HepG2 (cell line): ENCODE measurements at regions of chr6 and their contacts with region 1.

Region 1: GRCh38 chr6:31271641-31272357 is at the start of gene HLA-C:
- DNase-seq: peak; percentile 95
- ATAC-seq: peak; percentile 98
- H3K4me3 ChIP-seq: peak within 1 kb of the TSS; percentile 66 to 77 (median 69)
- H3K27ac ChIP-seq: peak within 1 kb of the TSS; percentile 35
- H3K4me1 ChIP-seq: peaks cover 9% of the 10 kb centered on the region
- H3K27me3 ChIP-seq: peaks cover 0 to 7% of the 10 kb centered on the region in 2 experiments; a peak in 3 of 5 replicates
- CTCF ChIP-seq: no peak; the same call in 1 of the 2 replicates
- EP300 ChIP-seq: no peak
- POLR2A ChIP-seq: peak in 1 of 2 experiments; percentile 73; a peak in 2 of 4 replicates
- RAD21 ChIP-seq: no peak
- total RNA-seq, gene HLA-C: 31.5 and 77.1 TPM in 2 replicates

Region 2: GRCh38 chr6:30238174-30238795 is 1033.5 kb before region 1 on chr6:
- CTCF ChIA-PET with region 1: no interaction called
- POLR2A ChIA-PET with region 1: no interaction called
- in situ Hi-C with region 1: no loop called
- intact Hi-C with region 1: no loop called
- DNase-seq: peak; percentile 60
- ATAC-seq: peak; percentile 93
- H3K4me3 ChIP-seq: no peak overlapping the region
- H3K27ac ChIP-seq: no peak overlapping the region
- H3K4me1 ChIP-seq: no peaks in the 10 kb centered on the region
- H3K27me3 ChIP-seq: peaks cover 1 to 19% of the 10 kb centered on the region in 2 experiments
- CTCF ChIP-seq: peak; percentile 86
- EP300 ChIP-seq: no peak
- POLR2A ChIP-seq: no peak
- RAD21 ChIP-seq: peak; percentile 77

Region 3: GRCh38 chr6:31143148-31143547 is 128.7 kb before region 1 on chr6:
- CTCF ChIA-PET with region 1: no interaction called
- POLR2A ChIA-PET with region 1: no interaction called
- in situ Hi-C with region 1: no loop called
- intact Hi-C with region 1: no loop called
- DNase-seq: no peak
- ATAC-seq: no peak
- H3K4me3 ChIP-seq: no peak overlapping the region
- H3K27ac ChIP-seq: no peak overlapping the region
- H3K4me1 ChIP-seq: no peaks in the 10 kb centered on the region
- H3K27me3 ChIP-seq: no peaks in the 10 kb centered on the region
- CTCF ChIP-seq: no peak
- EP300 ChIP-seq: no peak
- POLR2A ChIP-seq: no peak
- RAD21 ChIP-seq: no peak

Region 4: DNA sequence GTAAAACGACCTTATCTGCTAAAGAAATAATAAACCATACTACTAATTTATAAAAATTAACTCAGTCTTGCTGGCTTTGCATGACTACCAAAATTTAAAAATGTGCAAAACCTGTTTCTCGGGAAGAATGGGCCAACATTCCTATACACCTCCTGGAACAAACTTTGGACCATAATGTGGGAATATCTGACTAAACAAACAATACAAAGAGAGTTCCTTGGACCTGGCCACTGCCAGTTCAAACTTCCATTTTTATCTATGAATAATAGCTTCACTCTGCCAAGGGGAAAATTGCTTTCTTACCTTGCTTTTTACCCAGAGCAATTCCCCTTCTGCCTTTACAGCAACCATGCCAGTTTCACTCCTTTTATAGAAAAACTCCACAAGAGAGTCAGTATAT is 62.7 kb before region 1 on chr6:
- CTCF ChIA-PET with region 1: no interaction called
- POLR2A ChIA-PET with region 1: no interaction called
- in situ Hi-C with region 1: no loop called
- intact Hi-C with region 1: loop called (anchors 2 kb)
- DNase-seq: peak; percentile 89
- ATAC-seq: peak; percentile 74
- H3K4me3 ChIP-seq: peak overlapping the region in 2 of 3 experiments; percentile 39 to 41; a peak in 3 of 6 replicates
- H3K27ac ChIP-seq: peak overlapping the region; percentile 80
- H3K4me1 ChIP-seq: peaks cover 61% of the 10 kb centered on the region
- H3K27me3 ChIP-seq: no peaks in the 10 kb centered on the region
- CTCF ChIP-seq: no peak
- EP300 ChIP-seq: peak in 1 of 2 experiments; percentile 49; a peak in 2 of 4 replicates
- POLR2A ChIP-seq: no peak
- RAD21 ChIP-seq: no peak

Region 5: DNA sequence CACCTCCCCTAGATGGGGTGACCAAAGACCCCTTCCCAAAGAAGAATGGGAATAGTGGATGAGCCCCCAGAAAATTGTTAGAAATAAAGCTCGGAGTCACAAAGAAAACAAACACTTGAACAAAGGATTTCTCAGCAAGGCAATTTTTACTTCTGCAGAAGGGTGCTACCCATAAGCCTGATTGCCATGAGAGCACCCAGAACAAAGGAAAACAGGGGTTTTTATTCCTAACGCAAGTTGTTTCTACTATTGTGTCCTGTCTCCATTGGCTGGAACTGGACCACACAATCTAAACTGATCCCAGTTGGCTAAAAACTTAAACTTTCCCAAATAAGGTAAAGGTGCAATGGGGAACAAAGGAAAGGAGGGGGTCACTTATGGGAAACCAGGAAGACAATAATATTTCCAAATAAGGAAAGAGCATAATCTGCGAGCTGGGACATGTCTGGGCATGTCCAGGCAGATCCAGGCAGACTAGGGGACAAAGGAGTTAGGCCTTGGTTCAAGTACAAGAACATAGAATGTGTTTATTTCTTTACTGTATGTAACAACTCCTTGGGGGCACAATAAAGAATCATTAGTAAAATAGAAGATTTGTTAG is 65.2 kb after region 1 on chr6:
- CTCF ChIA-PET with region 1: no interaction called
- POLR2A ChIA-PET with region 1: no interaction called
- in situ Hi-C with region 1: no loop called
- intact Hi-C with region 1: no loop called
- DNase-seq: no peak
- ATAC-seq: no peak
- H3K4me3 ChIP-seq: no peak overlapping the region
- H3K27ac ChIP-seq: no peak overlapping the region
- H3K4me1 ChIP-seq: no peaks in the 10 kb centered on the region
- H3K27me3 ChIP-seq: no peaks in the 10 kb centered on the region
- CTCF ChIP-seq: no peak
- EP300 ChIP-seq: no peak
- POLR2A ChIP-seq: no peak
- RAD21 ChIP-seq: no peak

Region 6: DNA sequence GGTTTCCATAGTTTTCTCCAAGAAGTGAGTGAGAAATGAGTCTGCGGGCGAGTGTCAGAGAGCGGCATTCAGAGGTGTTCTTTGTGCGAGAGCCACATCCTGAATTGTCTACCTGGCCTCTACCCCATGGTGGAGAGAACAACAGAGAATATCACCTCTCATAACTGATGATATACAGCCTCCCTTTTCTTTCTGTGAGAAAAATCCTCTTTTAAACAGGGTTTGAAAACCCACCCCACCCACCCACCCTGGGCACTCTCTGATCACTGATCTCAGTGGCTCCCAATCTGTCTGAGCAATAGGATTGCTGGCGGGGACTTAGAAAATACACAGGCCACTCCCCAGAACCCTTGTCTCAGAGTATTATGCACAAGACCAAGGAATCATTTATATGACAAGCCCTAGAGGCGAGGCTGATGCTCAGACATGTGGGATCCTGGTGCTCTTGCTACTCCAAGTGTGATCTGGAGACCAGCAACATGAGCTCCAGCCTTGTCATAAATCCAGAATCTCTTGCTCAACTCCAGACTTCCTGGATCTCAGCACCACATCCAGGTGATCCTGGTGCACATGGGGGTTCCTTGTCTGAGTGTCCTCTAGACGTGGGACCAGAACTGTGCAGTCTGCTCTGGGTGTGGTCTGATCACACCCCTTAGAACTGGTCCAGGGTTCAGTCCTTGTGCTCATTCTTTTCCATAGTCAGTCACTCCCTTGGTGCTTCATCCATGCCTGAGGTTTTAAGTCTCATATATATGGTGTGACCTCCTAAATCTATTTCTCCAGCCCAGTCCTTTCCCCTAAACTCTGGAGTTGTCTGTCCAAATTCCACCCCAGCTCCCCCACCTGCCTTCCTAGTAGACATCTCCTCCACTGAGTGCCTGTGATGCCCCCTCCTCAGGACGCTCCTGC is 79.9 kb after region 1 on chr6:
- CTCF ChIA-PET with region 1: no interaction called
- POLR2A ChIA-PET with region 1: no interaction called
- in situ Hi-C with region 1: loop called (anchors 5 kb)
- intact Hi-C with region 1: loop called (anchors 2 kb)
- DNase-seq: no peak
- ATAC-seq: no peak
- H3K4me3 ChIP-seq: no peak overlapping the region
- H3K27ac ChIP-seq: no peak overlapping the region
- H3K4me1 ChIP-seq: peaks cover 9% of the 10 kb centered on the region; the same call in 1 of the 2 replicates
- H3K27me3 ChIP-seq: peaks cover 0 to 11% of the 10 kb centered on the region in 2 experiments; a peak in 1 of 5 replicates
- CTCF ChIP-seq: no peak
- EP300 ChIP-seq: no peak
- POLR2A ChIP-seq: no peak
- RAD21 ChIP-seq: no peak

Region 7: DNA sequence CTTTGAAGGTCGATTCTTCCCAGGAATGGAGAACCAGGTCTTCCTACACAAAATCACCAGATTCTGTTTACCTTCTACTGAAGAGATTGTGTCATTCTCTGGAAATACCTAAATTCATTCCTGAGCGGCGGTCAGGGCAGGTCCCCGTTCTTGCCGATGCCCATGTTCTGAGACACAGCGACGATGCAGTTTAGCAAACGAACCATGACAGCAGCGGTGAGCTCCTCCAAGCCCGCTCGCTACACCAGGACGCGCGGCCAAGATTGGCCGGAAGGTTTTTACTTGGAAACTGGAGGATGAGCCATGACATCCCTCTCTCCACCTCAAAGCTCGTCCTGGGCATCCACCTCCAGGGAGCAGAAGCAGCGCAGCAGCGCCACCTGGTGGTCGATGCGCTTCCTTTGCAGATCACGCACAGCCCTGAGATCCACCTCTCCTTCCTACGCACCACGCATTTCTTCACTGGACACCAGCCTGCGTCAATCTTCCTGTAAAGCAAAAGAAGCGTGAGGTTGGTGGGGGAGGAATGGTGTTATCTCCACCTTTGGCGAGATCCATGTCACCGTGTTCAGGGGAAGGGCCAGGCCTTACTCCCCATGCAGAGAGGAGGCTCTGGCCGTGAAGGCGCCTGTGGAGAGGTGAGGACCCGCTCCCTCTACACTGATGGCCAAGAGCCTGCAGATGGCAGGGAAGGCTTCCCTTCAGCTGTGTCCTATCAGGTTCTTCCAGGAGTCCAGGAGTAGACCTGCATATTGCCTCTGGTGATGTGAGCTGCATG is 95.1 kb after region 1 on chr6:
- CTCF ChIA-PET with region 1: no interaction called
- POLR2A ChIA-PET with region 1: no interaction called
- in situ Hi-C with region 1: no loop called
- intact Hi-C with region 1: loop called (anchors 2 kb)
- DNase-seq: peak; percentile 80
- ATAC-seq: peak; percentile 100
- H3K4me3 ChIP-seq: peak overlapping the region in 1 of 3 experiments; percentile 47; a peak in 1 of 6 replicates
- H3K27ac ChIP-seq: no peak overlapping the region
- H3K4me1 ChIP-seq: 0 out of 2 replicates have a peak, but pooled peaks cover 9% of the 10 kb centered on the region
- H3K27me3 ChIP-seq: peaks cover 2 to 20% of the 10 kb centered on the region in 2 experiments; a peak in 4 of 5 replicates
- CTCF ChIP-seq: peak; percentile 98
- EP300 ChIP-seq: no peak
- POLR2A ChIP-seq: no peak
- RAD21 ChIP-seq: peak; percentile 99

Region 8: DNA sequence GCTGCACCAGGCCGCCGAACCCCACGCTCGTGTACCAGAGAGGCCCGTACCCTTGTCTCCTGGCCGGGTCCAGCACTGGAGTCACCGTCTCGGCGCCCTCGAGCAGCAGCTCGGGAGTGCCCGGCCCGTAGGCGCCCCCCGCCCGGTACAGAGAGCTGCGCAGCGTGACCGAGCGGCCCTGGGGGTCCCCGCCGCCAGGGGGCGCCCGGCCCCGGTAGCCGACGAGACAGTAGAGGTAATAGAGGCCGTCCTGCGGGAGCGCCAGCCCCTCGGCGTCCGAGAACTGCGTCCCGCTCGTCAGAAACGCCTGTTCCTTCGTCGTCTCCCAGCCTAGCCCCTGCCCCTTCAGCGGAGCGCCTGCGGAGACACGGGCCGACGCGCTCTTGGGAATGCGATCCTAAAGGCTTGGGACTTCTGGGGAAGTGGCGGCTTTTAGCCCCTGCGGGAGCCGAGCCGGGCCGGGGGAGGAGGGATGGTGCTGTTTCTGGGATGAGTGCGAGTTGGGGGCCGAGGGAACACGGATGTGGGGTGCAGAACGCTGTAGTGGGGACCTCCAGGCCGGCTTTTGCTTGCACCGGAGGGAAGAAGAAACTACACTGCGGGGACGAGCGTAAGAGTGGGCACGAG is 309.1 kb after region 1 on chr6:
- CTCF ChIA-PET with region 1: no interaction called
- POLR2A ChIA-PET with region 1: no interaction called
- in situ Hi-C with region 1: no loop called
- intact Hi-C with region 1: no loop called
- DNase-seq: peak; percentile 61
- ATAC-seq: peak; percentile 94
- H3K4me3 ChIP-seq: peak overlapping the region; percentile 67 to 88 (median 78)
- H3K27ac ChIP-seq: no peak overlapping the region
- H3K4me1 ChIP-seq: peaks cover 25% of the 10 kb centered on the region
- H3K27me3 ChIP-seq: peaks cover 10 to 65% of the 10 kb centered on the region in 2 experiments; a peak in 4 of 5 replicates
- CTCF ChIP-seq: peak; percentile 95
- EP300 ChIP-seq: no peak
- POLR2A ChIP-seq: peak in 1 of 2 experiments; percentile 53; a peak in 1 of 4 replicates
- RAD21 ChIP-seq: peak; percentile 90